ENCODE measurements at regions of chr9 and their contacts with region 1.

Region 1: DNA sequence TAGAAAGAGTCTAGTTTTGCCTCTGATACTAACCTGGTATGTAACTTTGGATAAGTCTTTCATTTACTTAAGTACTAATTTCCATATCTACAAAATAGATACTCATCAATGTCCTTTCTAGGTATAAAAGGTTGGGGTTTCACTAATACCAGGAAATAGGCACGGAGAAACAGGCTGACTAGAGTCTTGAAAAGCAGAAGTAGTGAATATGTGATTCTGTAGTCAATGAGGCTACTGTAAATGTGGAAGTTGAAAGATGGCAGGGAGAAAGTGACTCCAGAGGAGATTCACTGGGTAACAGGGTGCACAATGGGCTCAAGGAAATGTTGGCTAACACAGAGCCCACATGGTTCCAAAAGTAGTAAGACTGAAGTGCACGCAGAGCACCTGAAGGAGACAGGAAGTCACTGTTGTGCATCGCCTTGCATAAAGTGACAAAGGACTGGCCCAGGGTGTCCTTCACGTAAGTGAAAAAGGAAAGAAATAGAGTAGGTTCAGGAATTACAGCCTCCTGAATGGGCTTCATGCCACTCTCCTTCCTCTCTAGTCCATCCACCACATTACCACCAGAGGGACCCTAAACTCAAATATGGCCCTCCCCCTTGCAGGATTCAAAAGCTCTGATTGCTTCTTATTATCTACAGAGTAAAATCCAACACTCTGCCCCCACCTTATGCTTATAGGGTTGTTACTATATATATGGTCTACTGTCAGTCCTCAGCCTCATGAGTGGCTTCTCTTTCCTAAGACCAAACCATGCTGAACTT is 288.0 kb upstream of the SMARCA2 start:
- DNase-seq: no peak
- H3K4me3 ChIP-seq: no peak overlapping the region
- H3K27ac ChIP-seq: no peak overlapping the region
- H3K4me1 ChIP-seq: no peaks in the 10 kb centered on the region
- CTCF ChIP-seq: peak; percentile 38

Region 2: GRCh38 chr9:1939926-1940368 is 212.8 kb after region 1 on chr9:
- CTCF ChIA-PET with region 1: no interaction called
- POLR2A ChIA-PET with region 1: no interaction called
- intact Hi-C with region 1: loop called (anchors 10 kb)
- DNase-seq: peak; percentile 48
- H3K4me3 ChIP-seq: no peak overlapping the region
- H3K27ac ChIP-seq: no peak overlapping the region
- H3K4me1 ChIP-seq: peaks cover 12% of the 10 kb centered on the region
- CTCF ChIP-seq: peak; percentile 87

Measured in OCI-LY7 (cell line).